Activated CD8-positive, alpha-beta memory T cell treated with anti-CD3 and anti-CD28 coated beads, Interleukin-2, amount 10 ng/mL, durations not matched to agents 7 days and 5 days (primary cell): ENCODE measurements at regions of chr9 and their contacts with region 1.

Region 1: DNA sequence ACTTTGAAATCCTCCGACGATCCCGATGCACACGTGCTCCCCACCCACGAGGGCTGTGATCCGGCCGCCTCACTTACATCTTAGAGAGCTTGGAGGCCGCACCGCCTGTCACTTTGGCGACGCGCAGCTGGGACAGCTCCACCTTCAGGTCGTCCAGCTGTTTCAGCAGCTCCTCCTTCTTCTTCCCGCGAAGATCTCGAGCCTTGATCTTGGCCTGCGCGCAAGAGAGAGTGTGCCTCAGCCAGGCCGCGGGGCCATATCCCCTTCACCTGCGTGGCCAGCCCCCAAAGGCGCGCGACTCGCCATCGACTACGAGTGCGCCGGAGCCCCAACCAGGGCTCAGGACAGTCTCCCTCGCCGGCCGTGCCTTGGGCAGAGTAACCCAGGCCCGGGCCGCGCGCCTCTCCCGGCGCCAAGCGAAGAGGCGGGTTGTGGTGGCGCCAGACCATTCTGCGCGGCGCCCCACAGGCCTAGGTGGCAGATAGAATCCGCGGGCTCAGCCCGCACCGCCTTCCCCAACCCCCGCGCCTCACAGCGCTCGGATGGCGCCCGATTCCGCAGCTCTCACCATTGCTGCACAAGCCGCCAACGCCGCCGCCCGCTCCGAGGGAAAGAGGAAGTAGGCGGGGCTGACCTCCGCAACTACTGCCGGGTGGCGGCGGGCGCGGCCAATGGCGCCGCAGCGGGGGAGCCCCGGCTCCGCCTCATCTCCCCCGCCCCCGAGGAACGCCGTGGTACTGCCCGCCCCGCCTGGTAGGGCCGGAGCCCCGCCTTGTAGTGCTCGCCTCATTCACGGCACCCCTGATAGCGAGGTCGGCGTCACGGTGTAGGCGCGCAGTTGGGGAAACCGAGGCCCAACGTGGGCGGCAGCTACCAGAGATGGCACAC is at the starts of genes ARPC5L and RPL35:
- DNase-seq: peak; percentile 97
- ATAC-seq: peak; percentile 97
- H3K4me3 Mint-ChIP-seq: peak within 1 kb of the TSS; percentile 81
- H3K27ac Mint-ChIP-seq: peak within 1 kb of the TSS; percentile 91
- H3K4me1 Mint-ChIP-seq: peaks cover 41% of the 10 kb centered on the region
- H3K27me3 Mint-ChIP-seq: no peaks in the 10 kb centered on the region
- total RNA-seq, gene ARPC5L: 79.1 to 90.6 TPM
- total RNA-seq, gene RPL35: 1,421 to 1,557 TPM

Region 2: DNA sequence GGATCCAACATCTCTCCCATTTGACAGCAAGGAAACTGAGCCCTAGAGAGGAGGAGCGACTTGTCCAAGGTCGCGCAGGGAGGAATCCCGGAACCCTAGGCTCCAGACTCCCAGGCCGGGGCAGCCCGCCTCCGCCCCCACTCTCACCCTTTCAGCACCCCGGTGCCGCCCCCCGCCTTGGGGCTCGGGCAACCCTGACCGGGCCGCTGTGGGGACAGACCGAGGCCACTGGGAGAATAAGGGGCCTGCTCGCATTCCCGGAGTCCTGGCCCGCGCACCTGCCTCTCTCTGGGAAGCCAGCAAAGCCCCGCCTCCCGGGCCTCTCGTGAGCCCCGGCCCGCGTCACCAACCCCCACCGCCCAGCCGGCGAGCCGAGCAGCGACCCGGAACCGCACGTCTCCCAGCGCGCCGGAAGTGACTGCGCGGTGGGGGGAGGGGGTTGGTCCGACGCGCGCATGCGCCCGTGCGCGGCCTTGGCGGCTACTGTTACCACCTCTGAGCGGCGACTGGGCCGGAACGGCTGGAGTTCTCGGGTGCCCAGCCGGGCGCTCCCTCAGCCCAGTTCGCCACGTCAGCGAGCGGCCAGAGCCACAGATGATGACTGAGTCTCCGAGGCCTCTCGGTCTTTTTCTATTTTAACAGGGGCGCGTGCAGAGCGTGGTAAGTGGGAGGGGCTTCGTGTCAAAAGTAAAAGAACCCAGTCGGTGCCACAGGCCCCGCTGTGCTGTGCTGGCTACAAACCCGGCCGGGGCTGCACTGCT is 79.3 kb after region 1 on chr9 and contains the start of gene GOLGA1:
- CTCF ChIA-PET with region 1: interaction called, 13 read pairs
- DNase-seq: peak; percentile 95
- ATAC-seq: peak; percentile 86
- H3K4me3 Mint-ChIP-seq: peak within 1 kb of the TSS; percentile 93
- H3K27ac Mint-ChIP-seq: peak within 1 kb of the TSS; percentile 95
- H3K4me1 Mint-ChIP-seq: peaks cover 28% of the 10 kb centered on the region
- H3K27me3 Mint-ChIP-seq: no peaks in the 10 kb centered on the region
- total RNA-seq, gene GOLGA1: 13.5 to 19.0 TPM